HEK293T (cell line): ENCODE measurements at regions of chr10 and their contacts with region 1.

Region 1: DNA sequence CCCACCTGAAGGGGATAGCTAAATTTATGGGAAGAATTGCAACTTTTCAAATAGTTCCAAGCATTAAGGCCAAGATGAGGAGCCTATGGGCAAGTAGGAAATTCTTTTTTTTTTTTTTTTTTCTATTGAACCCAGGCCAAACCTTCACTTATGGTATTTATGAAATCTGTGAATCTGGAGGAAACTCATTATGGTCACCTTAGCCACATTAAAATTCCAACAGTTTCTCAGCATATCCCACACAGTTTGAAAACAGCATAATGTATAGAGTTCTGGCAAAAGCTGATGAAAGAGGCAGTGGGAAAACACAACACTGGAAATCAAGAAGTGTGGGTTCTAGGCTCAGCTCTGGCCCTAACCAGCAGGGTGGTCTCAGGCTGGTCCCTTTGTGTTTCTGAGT is 236.9 kb downstream of the PTEN start:
- DNase-seq: no peak

Region 2: DNA sequence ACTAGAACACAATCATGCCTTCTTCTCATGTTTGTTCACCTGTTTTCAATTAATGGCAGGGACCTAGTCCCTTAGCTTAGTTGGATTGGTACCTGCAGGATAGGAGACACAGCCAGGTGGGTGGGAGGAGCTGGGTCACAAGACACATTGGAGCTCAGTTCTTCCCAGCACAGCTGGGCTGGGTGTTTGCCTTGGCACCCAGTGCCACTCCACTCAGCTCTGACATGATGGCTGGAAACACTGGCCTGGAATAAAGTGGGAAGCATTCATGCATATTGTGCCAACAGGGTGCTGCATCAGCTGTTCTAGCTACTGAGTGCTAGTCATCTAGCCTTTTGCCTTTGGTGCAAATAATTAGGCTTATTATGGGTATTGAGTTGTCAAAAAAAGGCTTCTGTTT is 10.8 kb before region 1 on chr10:
- CTCF ChIA-PET with region 1: no interaction called
- POLR2A ChIA-PET with region 1: no interaction called
- DNase-seq: no peak

Region 3: DNA sequence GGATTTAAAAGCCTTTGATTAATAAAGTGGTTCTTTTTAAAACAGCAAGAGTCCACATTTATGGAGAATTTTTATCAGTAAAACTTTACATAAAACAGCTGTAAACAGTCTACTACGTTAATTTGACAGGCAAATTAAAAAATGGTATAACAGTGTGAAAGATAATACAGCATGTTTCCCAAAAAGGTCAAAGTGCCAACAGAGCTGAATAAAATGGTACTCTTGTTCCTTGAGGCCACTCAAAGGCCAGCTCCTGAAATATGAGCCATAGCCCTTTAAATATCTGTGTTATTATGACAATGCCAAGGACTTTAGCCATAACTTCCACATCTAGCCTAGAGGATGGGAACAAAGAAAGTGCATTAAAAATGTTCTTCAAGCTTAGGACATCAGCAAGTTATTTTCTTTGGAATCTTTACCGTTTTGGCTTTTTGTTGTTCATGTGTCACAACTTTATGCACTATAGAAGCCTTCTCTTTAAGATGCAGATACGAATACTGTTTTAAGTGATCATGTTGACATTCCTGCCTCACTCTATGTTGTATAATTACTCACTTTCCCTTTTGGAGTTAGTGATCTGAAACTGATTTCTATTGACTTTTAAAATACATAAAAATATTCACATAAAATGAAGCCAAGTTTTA is 317.2 kb after region 1 on chr10:
- CTCF ChIA-PET with region 1: interaction called, 10 read pairs
- POLR2A ChIA-PET with region 1: no interaction called
- DNase-seq: no peak

Region 4: GRCh38 chr10:88515235-88515634 is 415.0 kb after region 1 on chr10:
- CTCF ChIA-PET with region 1: no interaction called
- POLR2A ChIA-PET with region 1: no interaction called
- DNase-seq: no peak